Colonic mucosa (tissue), 4 donors: ENCODE measurements at regions of chr7 and their contacts with region 1.

Region 1: DNA sequence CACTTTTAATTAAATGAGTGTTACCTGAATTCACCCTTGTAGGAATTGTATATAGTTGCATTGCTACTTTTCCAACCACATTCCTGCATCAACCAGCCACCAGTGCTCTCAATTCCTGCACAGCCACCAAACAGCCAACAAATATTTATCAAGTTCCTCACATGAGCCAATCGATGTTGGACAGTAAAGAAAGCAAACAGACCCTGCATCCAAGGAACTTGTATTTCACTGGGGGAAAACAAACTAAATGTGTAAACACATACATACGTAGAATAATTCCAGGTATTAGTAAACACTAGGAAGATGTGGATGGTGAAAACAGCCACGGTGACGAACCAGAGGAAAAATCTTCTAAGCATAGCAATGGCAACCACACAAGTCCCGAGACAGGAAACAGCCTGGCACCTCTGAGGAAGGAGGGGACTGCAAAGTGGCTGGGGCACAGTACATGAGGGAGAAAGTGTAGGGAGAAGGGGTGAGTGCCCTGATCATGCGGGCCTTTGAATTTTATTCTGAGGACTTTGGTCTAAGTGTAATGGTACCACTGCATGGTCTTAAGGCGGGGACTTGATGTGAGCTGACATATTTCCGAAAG is 111.2 kb downstream of the XRCC2 start:
- DNase-seq: no peak
- H3K4me3 ChIP-seq: no peak overlapping the region
- H3K27ac ChIP-seq: no peak overlapping the region
- H3K4me1 ChIP-seq: no peaks in the 10 kb centered on the region
- H3K27me3 ChIP-seq: no peaks in the 10 kb centered on the region
- CTCF ChIP-seq: no peak

Region 2: GRCh38 chr7:152615031-152615741 is 50.4 kb after region 1 on chr7:
- intact Hi-C with region 1: loop called (anchors 5 kb)
- DNase-seq: no peak
- H3K4me3 ChIP-seq: no peak overlapping the region
- H3K27ac ChIP-seq: no peak overlapping the region
- H3K4me1 ChIP-seq: no peaks in the 10 kb centered on the region
- H3K27me3 ChIP-seq: no peaks in the 10 kb centered on the region
- CTCF ChIP-seq: no peak